ENCODE measurements at regions of chr12 and their contacts with region 1.

Region 1: DNA sequence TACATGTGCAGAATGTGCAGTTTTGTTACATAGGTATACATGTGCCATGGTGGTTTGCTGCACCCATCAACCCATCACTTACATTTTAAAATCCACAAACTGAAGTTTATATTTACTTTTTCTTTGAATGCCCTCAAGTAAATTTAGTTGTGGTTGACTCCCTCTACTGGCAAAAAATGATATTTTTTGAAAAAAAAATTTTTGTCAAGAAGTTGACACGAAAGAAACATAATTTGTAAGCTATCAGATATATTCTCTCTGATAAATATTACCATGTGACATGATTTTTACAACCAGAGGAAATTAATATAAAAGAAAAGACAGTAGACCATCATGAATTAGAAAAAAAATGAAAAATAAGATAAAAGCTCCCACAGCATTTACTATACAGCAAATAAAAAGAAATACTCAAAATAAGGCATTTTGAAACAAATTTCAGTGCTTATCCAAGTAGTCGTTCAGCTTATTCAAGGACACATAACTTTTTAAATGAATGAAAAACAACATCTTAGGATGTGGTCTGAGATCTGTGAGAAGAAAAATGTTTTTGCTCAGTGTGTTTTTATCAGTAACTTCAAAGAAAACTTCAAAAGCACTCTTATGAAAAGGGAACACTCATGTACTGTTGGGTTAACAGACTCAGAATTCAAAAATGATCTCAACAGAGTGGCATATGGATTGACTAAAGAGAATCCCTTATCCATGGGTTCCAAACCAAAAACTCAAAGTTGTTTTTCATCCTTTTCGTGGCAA is 30.0 kb upstream of the GRIP1 start:
- DNase-seq: peak; percentile 63
- H3K4me3 ChIP-seq: no peak overlapping the region
- H3K27ac ChIP-seq: no peak overlapping the region
- H3K4me1 ChIP-seq: peaks cover 8% of the 10 kb centered on the region
- CTCF ChIP-seq: peak; percentile 84

Region 2: DNA sequence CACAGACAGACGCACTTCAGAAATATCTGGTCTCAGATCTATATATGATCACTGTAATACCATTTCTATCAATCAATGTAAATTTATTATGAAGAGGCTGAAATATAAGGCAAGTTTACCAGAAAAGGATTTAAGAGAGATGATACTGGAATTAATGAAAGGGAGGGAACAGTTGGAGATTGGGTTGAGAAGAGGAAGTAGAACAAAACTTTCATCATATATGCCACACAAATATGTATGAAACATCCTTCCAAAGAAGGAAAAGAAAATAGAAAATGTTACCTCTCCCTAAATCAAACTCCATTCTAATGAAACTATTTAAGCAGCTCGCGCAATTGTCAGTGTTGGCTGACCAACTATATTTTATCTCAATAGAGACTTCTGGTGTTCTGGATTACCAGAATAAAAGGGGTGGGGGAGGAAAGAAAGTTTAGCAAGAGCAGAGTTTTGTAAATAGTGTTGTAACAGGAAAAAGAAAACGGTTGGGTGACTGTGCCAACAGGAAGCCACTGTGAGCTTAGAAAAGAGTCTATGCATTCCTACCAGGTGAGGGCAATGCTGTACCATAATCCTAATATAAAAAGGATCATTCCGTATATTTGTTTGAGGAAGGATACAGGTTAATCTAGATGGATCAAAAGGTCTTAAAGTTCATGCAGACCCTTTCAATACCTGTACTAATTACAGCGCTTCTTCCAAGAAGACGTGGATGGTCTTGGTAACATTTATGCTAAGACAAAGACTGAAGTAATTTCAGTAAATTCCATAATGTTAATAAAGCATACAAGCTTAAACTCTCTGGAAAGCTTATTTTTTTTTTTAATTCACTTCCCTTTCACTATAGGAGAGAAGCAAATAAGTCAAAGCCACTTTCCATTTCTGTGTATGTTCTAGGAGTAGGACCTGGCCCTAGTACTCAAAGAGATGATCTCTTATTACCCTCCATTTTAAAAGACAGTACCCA is 563.8 kb before region 1 on chr12:
- CTCF ChIA-PET with region 1: no interaction called
- POLR2A ChIA-PET with region 1: no interaction called
- intact Hi-C with region 1: loop called (anchors 10 kb)
- DNase-seq: peak; percentile 44
- H3K4me3 ChIP-seq: no peak overlapping the region
- H3K27ac ChIP-seq: peak overlapping the region; percentile 29
- H3K4me1 ChIP-seq: peaks cover 8% of the 10 kb centered on the region
- CTCF ChIP-seq: peak; percentile 75

Region 3: DNA sequence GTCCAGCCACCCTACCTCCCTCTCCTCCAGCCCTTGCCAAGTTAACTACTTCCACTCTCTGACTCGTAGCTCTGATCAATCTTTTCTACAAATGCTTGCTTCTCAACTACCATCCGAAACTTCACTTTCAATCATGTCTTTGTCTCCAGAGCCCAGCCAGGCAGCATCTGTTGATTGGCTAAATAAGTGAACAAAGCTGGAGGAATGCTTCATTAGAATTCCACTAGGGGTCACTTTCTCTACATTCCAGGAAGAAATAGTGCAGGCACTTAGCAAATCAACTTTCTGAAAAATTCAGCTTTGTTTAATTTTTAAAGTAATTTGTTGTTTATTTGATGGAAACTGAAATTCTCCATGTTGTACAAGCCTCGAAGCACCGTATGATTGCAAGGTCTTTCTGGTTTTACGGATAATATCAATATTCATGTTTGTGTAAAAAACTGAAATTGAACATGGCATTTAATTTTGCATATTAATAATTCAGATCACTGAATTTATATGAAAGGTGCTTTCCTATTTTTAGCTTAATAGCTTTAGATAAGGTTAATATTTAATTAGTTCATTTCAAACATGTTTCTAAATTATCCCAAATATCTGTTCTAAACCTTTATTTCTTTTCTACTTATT is 439.0 kb before region 1 on chr12:
- CTCF ChIA-PET with region 1: no interaction called
- POLR2A ChIA-PET with region 1: interaction called, 4 read pairs
- intact Hi-C with region 1: loop called (anchors 5 kb)
- DNase-seq: peak; percentile 62
- H3K4me3 ChIP-seq: no peak overlapping the region
- H3K27ac ChIP-seq: no peak overlapping the region
- H3K4me1 ChIP-seq: peaks cover 32% of the 10 kb centered on the region
- CTCF ChIP-seq: peak; percentile 84

Region 4: GRCh38 chr12:66352197-66352596 is 356.7 kb before region 1 on chr12:
- CTCF ChIA-PET with region 1: no interaction called
- POLR2A ChIA-PET with region 1: no interaction called
- intact Hi-C with region 1: loop called (anchors 1 kb)
- DNase-seq: peak; percentile 67
- H3K4me3 ChIP-seq: no peak overlapping the region
- H3K27ac ChIP-seq: no peak overlapping the region
- H3K4me1 ChIP-seq: no peaks in the 10 kb centered on the region
- CTCF ChIP-seq: peak; percentile 70

Region 5: GRCh38 chr12:66684222-66684621 is 24.7 kb before region 1 on chr12:
- CTCF ChIA-PET with region 1: no interaction called
- POLR2A ChIA-PET with region 1: no interaction called
- intact Hi-C with region 1: no loop called
- DNase-seq: no peak
- H3K4me3 ChIP-seq: no peak overlapping the region
- H3K27ac ChIP-seq: no peak overlapping the region
- H3K4me1 ChIP-seq: peaks cover 33% of the 10 kb centered on the region
- CTCF ChIP-seq: no peak